CD8-positive, alpha-beta memory T cell (primary cell): ENCODE measurements at regions of chr1 and their contacts with region 1.

Region 1: DNA sequence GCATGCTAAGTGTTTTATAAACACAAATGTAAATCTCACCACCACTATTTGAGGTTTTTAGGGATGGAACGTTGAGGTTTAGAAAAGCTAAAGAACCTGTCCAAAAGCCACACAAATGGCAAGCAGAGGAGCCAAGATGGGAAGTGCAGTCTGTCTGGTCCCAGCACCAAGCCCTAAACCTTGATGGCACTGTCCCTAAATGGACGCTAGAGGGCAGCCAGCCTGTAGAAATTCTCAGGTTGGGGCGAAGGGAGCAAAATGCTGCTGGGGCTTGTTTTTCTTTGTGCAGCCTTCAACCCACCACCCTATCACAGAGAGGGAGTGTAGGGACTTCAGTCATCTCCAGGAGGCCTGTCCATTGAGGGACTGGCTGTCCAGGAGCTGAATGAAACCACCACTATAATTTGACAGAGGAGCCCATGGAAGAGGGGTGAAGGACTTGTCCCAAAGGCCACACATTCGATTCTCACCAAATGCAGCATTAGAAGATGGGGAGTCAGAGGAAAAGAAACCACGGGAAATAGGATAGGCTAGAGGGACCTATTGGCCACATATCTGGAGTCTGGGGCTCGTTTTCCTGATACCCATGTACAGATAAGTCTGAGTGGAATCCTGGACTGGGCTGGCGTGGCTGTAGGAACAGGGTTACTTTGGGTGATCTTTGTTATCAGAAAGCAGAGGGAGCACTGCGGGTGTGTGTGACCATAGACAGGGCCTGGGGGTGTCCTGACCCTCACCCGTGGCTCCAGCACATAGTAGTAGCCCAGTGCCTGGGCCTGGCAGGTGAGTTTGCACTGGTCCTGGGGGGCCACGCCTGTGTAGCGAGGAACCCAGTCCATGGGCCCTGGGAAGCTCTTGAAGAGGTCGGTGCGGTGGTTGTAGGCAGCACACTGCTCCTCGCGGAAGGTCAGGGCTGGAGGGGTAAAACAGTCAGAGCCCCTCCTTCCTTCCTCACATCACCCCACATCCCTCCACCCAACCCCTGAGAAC is 6.1 kb downstream of the ADAMTS4 start:
- DNase-seq: peak; percentile 43 to 76 (median 63)
- H3K4me3 ChIP-seq: no peak overlapping the region
- H3K4me3 Mint-ChIP-seq: peak overlapping the region in 5 of 7 donors; percentile 13 to 86 (median 61)
- H3K27ac ChIP-seq: no peak overlapping the region
- H3K27ac Mint-ChIP-seq: peak overlapping the region; percentile 67 to 99 (median 90)
- H3K4me1 ChIP-seq: peaks cover 48% of the 10 kb centered on the region
- H3K4me1 Mint-ChIP-seq: peaks cover 40 to 61% (median 45%) of the 10 kb centered on the region in 3 donors
- H3K27me3 ChIP-seq: no peaks in the 10 kb centered on the region
- H3K27me3 Mint-ChIP-seq: peaks cover 0 to 3% of the 10 kb centered on the region in 2 donors

Region 2: GRCh38 chr1:161177112-161177935 is 15.4 kb before region 1 on chr1 and contains the start of gene B4GALT3:
- CTCF ChIA-PET with region 1: interaction called, 71 read pairs
- POLR2A ChIA-PET with region 1: interaction called, 11 read pairs
- DNase-seq: peak; percentile 88 to 94 (median 92)
- H3K4me3 ChIP-seq: peak within 1 kb of the TSS; percentile 98
- H3K4me3 Mint-ChIP-seq: peak within 1 kb of the TSS; percentile 95 to 100 (median 100)
- H3K27ac ChIP-seq: peak within 1 kb of the TSS; percentile 89
- H3K27ac Mint-ChIP-seq: peak within 1 kb of the TSS; percentile 93 to 100 (median 99)
- H3K4me1 ChIP-seq: peaks cover 47% of the 10 kb centered on the region
- H3K4me1 Mint-ChIP-seq: peaks cover 68 to 87% (median 85%) of the 10 kb centered on the region in 3 donors
- H3K27me3 ChIP-seq: no peaks in the 10 kb centered on the region
- H3K27me3 Mint-ChIP-seq: peaks cover 0 to 5% of the 10 kb centered on the region in 2 donors
- total RNA-seq, gene B4GALT3: 59.4 to 60.9 TPM

Region 3: DNA sequence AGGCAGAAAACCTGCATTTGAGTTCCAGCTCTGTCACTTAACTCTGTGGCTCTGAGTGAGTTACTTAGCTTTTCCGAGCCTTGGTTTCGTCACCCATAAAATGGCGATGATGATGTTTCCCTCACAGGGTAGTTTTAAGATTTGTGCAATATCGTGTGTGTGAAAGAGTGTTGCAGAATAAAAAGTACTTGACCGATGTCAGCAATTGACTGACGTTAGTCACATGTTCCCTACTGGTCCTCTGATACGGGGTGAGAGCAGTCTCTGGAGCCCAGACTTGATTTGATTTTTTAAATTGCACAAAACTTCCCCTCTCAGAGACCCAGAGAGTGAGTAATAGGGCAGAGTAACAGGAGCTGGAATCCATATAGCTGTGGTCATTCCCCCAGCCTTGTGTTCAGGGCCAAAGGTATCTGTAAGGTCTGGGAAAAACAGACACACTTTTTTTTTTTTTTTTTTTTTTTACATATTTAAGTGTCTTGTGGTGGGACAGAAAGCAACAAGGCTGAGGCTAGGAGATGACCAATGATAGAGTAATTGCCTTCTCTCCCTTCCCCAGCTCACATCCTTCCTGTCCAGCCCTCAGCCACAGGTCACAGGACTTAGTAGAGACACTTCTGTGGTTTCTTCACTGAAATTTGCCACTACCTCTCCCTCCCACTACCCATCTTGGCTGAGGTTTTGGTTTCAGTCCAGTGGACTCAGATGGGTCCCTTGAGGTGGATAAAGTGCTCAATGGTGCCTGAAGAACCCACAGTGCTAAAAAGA is 24.4 kb after region 1 on chr1:
- CTCF ChIA-PET with region 1: interaction called, 66 read pairs
- POLR2A ChIA-PET with region 1: no interaction called
- DNase-seq: no peak
- H3K4me3 ChIP-seq: no peak overlapping the region
- H3K4me3 Mint-ChIP-seq: peak overlapping the region in 2 of 7 donors; percentile 35 to 66
- H3K27ac ChIP-seq: no peak overlapping the region
- H3K27ac Mint-ChIP-seq: peak overlapping the region in 5 of 8 donors; percentile 7 to 82 (median 77)
- H3K4me1 ChIP-seq: peaks cover 37% of the 10 kb centered on the region
- H3K4me1 Mint-ChIP-seq: peaks cover 24 to 42% (median 31%) of the 10 kb centered on the region in 3 donors
- H3K27me3 ChIP-seq: no peaks in the 10 kb centered on the region
- H3K27me3 Mint-ChIP-seq: peaks cover 0 to 3% of the 10 kb centered on the region in 2 donors

Region 4: GRCh38 chr1:161261261-161262235 is 68.8 kb after region 1 on chr1:
- CTCF ChIA-PET with region 1: no interaction called
- POLR2A ChIA-PET with region 1: no interaction called
- DNase-seq: no peak
- H3K4me3 ChIP-seq: no peak overlapping the region
- H3K4me3 Mint-ChIP-seq: no peak overlapping the region
- H3K27ac ChIP-seq: no peak overlapping the region
- H3K27ac Mint-ChIP-seq: no peak overlapping the region
- H3K4me1 ChIP-seq: no peaks in the 10 kb centered on the region
- H3K4me1 Mint-ChIP-seq: peaks cover 10 to 19% (median 15%) of the 10 kb centered on the region in 3 donors
- H3K27me3 ChIP-seq: peaks cover 25% of the 10 kb centered on the region
- H3K27me3 Mint-ChIP-seq: peaks cover 56 to 80% of the 10 kb centered on the region in 2 donors